CD8-positive, alpha-beta T cell (primary cell): ENCODE measurements at regions of chr22 and their contacts with region 1.

Region 1: DNA sequence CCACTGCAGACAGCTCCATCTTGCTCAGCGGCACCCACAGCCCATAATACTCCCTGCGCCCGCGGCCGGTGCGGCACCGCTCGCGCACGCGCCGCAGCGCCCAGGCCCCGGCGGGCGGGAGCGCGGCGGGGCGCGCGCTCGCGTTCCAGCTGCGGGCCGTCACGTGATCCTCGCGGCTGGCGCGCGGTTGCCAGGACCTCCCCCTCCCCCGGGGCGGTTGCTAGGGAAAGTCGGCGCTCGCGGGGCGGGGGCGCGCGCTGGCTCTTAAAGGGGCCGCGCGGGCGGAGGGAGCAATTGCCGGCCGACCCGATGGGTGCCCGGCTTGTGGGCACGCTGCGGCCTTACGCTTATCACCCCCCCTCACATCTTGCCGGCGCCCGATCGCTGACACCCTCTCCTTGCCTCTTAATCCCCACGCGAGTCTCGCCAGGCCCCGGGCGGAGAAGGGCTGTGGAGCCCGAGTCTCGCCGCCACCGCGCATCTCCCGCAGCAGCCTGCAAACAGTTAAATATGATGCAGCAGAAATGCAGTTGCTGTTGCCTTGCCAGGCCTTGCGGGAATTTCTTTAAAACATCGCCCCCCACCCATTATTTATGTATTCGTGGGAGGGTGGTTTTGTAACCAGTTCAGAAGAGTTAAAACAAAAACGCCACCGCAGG is at the start of gene CBX6:
- DNase-seq: peak; percentile 90 to 98 (median 96)
- ATAC-seq: peak; percentile 70
- H3K4me3 ChIP-seq: peak within 1 kb of the TSS; percentile 91 to 98
- H3K4me3 Mint-ChIP-seq: peak within 1 kb of the TSS; percentile 89
- H3K27ac ChIP-seq: peak within 1 kb of the TSS; percentile 62 to 65
- H3K27ac Mint-ChIP-seq: peak within 1 kb of the TSS; percentile 81
- H3K4me1 ChIP-seq: peaks cover 41% of the 10 kb centered on the region
- H3K4me1 Mint-ChIP-seq: peaks cover 44% of the 10 kb centered on the region
- H3K27me3 ChIP-seq: no peaks in the 10 kb centered on the region
- H3K27me3 Mint-ChIP-seq: no peaks in the 10 kb centered on the region
- CTCF ChIP-seq: no peak
- total RNA-seq, gene CBX6: 36.0 to 39.5 TPM

Region 2: DNA sequence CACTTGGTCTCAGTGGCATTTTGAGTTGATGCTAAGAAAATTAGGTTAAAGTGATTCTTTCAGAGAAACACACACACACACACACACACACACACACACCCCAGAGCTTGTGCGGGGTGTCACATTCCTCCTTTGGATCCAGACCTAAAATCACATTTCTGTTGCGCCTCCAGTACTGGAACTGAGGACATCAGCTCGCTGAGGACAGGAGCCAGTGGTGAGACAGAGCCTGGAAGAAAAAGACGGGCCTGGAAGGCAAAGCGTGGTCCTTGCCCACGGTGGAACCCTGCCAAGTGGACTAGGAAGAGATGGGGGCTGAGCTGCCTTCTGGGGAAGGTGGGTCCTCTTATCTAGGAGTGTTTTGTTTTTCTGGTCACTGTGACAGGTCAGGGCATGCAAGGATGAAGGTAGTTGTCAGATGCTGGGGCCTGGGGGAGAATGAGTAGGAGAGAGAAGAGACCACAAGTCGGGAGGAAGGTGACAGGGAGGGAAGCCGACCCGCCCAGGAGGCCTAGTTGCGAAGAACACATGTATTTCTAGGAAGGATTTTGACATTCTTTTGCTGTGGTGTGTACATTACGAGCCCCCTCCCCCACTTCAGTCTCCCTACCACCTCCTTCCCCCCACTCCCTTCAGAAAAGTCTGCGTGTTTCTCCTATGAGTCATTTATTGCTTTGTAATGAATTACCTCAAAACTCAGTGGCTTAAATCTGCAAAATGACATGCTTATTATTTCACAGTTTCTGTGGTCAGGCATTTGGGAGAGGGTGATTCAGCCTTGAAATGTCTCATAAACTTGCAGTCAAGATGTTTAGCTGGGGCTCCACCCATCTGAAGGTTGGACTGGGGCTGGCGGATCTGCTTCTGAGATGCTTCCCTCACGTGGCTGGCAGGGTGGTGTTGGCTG is 1440.2 kb before region 1 on chr22:
- CTCF ChIA-PET with region 1: no interaction called
- POLR2A ChIA-PET with region 1: no interaction called
- intact Hi-C with region 1: no loop called
- DNase-seq: no peak
- ATAC-seq: no peak
- H3K4me3 ChIP-seq: no peak overlapping the region
- H3K4me3 Mint-ChIP-seq: no peak overlapping the region
- H3K27ac ChIP-seq: no peak overlapping the region
- H3K27ac Mint-ChIP-seq: no peak overlapping the region
- H3K4me1 ChIP-seq: peaks cover 11% of the 10 kb centered on the region
- H3K4me1 Mint-ChIP-seq: peaks cover 11% of the 10 kb centered on the region
- H3K27me3 ChIP-seq: peaks cover 17 to 20% of the 10 kb centered on the region in 2 experiments
- H3K27me3 Mint-ChIP-seq: peaks cover 41% of the 10 kb centered on the region
- CTCF ChIP-seq: no peak

Region 3: DNA sequence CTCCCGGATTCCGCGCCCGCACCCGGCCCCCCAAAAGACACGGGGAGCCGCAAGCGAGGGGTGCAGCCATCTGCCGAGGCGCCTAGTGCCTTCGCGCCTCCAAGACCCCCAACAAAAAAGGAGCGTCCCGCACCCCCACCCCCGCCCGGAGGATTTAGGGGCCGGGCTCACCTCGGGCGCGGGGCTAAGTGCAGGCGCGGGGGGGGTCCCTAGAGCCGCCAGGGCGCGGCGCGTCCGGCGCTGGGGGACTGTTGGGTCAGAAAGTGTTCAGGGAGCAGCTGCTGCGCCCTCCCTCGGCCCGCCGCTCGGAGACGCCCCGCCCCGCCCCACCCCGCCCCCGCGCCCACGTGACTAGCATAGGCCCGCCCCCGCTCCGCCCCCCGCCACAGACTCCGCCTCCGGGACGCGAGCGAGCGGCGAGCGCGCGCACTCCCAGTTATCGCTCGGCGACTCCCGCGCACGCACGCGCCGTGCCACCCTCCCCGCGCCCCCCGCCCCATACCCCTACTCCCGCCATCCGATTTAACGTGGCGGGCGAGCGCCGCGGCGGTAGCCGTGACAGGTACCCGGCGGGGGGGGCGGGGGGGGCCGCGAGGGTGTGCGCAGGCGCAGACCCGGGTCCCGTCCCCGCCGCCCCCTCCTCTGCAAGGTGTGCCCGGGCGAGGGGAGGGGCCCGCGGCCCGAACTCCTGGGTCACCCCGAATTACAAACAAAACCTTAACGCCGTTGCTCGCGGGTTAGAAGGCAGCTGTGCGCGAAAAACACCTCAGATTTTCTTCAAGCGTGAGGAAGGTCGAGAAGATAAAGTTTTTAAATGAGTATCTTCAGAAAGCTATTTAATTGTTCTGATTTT is 473.5 kb before region 1 on chr22:
- CTCF ChIA-PET with region 1: no interaction called
- POLR2A ChIA-PET with region 1: no interaction called
- intact Hi-C with region 1: loop called in 1 of 2 experiments (anchors 5 kb)
- DNase-seq: peak; percentile 67 to 91 (median 82)
- ATAC-seq: peak; percentile 79
- H3K4me3 ChIP-seq: peak overlapping the region; percentile 55 to 60
- H3K4me3 Mint-ChIP-seq: peak overlapping the region; percentile 81
- H3K27ac ChIP-seq: peak overlapping the region in 1 of 2 experiments; percentile 30
- H3K27ac Mint-ChIP-seq: no peak overlapping the region
- H3K4me1 ChIP-seq: no peaks in the 10 kb centered on the region
- H3K4me1 Mint-ChIP-seq: peaks cover 18% of the 10 kb centered on the region
- H3K27me3 ChIP-seq: no peaks in the 10 kb centered on the region
- H3K27me3 Mint-ChIP-seq: no peaks in the 10 kb centered on the region
- CTCF ChIP-seq: no peak

Region 4: DNA sequence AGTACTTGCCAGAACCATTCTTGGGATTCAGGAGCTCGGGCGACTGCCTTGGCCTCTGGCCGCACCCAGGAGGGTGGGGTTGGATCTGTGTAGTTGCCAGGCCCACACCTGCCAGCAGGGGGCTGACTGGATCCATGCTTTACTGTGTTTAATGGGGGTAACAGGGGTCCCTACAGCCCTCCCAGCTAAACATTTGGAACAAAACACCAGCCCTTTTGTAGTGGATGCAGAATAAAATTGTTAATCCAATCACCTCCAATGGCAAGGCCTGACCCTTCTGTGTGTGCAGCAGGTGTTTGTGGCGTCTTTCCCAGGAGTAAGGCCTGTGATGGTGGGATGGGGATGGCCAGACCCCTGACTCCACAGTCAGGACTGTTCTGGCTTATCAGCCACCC is 139.0 kb before region 1 on chr22:
- CTCF ChIA-PET with region 1: interaction called, 14 read pairs
- POLR2A ChIA-PET with region 1: interaction called, 7 read pairs
- intact Hi-C with region 1: no loop called
- DNase-seq: peak in 7 of 9 experiments; percentile 56 to 84 (median 67)
- ATAC-seq: peak; percentile 64
- H3K4me3 ChIP-seq: no peak overlapping the region
- H3K4me3 Mint-ChIP-seq: no peak overlapping the region
- H3K27ac ChIP-seq: peak overlapping the region in 1 of 2 experiments; percentile 40
- H3K27ac Mint-ChIP-seq: peak overlapping the region; percentile 75
- H3K4me1 ChIP-seq: peaks cover 49% of the 10 kb centered on the region
- H3K4me1 Mint-ChIP-seq: peaks cover 56% of the 10 kb centered on the region
- H3K27me3 ChIP-seq: no peaks in the 10 kb centered on the region
- H3K27me3 Mint-ChIP-seq: no peaks in the 10 kb centered on the region
- CTCF ChIP-seq: peak; percentile 83

Region 5: DNA sequence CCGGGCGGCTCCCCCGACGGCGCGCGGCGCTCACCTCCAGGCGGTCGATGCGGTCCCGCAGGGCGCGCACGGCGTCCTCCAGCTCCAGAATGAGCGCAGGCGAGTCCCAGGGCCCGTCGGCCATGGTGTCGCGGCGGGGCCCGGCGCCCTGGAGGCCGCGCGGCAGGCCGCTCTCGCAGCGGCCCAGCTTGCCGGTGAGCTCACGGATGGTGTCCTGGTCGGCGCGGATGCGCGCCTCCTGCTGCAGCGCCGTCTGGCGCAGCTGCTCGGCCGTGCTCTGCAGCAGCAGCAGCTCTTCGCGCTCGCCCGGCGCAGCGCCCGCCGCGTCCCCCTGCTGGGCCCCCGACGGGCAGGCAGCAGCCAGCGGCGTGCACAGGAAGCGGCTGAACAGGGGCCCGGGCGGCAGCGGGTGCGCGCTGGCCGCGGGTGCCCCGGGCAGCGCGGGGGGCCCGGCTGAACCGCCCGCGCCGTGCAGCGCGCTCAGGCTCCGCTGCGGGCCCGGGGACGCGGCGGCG is 29.0 kb before region 1 on chr22:
- CTCF ChIA-PET with region 1: interaction called, 23 read pairs
- POLR2A ChIA-PET with region 1: interaction called, 3 read pairs
- intact Hi-C with region 1: loop called in 1 of 2 experiments (anchors 1 kb)
- DNase-seq: peak; percentile 19 to 85 (median 54)
- ATAC-seq: peak; percentile 85
- H3K4me3 ChIP-seq: peak overlapping the region in 1 of 2 experiments; percentile 50
- H3K4me3 Mint-ChIP-seq: peak overlapping the region; percentile 29
- H3K27ac ChIP-seq: no peak overlapping the region
- H3K27ac Mint-ChIP-seq: no peak overlapping the region
- H3K4me1 ChIP-seq: peaks cover 19% of the 10 kb centered on the region
- H3K4me1 Mint-ChIP-seq: peaks cover 26% of the 10 kb centered on the region
- H3K27me3 ChIP-seq: no peaks in the 10 kb centered on the region
- H3K27me3 Mint-ChIP-seq: peaks cover 14% of the 10 kb centered on the region
- CTCF ChIP-seq: no peak

Region 6: GRCh38 chr22:39003165-39003638 is 130.9 kb after region 1 on chr22:
- CTCF ChIA-PET with region 1: interaction called, 110 read pairs
- POLR2A ChIA-PET with region 1: interaction called, 13 read pairs
- intact Hi-C with region 1: loop called (anchors 1 kb)
- DNase-seq: peak; percentile 43 to 92 (median 76)
- ATAC-seq: peak; percentile 83
- H3K4me3 ChIP-seq: no peak overlapping the region
- H3K4me3 Mint-ChIP-seq: no peak overlapping the region
- H3K27ac ChIP-seq: no peak overlapping the region
- H3K27ac Mint-ChIP-seq: peak overlapping the region; percentile 27
- H3K4me1 ChIP-seq: peaks cover 10% of the 10 kb centered on the region
- H3K4me1 Mint-ChIP-seq: peaks cover 12% of the 10 kb centered on the region
- H3K27me3 ChIP-seq: no peaks in the 10 kb centered on the region
- H3K27me3 Mint-ChIP-seq: peaks cover under 1% of the 10 kb centered on the region
- CTCF ChIP-seq: peak; percentile 68

Region 7: DNA sequence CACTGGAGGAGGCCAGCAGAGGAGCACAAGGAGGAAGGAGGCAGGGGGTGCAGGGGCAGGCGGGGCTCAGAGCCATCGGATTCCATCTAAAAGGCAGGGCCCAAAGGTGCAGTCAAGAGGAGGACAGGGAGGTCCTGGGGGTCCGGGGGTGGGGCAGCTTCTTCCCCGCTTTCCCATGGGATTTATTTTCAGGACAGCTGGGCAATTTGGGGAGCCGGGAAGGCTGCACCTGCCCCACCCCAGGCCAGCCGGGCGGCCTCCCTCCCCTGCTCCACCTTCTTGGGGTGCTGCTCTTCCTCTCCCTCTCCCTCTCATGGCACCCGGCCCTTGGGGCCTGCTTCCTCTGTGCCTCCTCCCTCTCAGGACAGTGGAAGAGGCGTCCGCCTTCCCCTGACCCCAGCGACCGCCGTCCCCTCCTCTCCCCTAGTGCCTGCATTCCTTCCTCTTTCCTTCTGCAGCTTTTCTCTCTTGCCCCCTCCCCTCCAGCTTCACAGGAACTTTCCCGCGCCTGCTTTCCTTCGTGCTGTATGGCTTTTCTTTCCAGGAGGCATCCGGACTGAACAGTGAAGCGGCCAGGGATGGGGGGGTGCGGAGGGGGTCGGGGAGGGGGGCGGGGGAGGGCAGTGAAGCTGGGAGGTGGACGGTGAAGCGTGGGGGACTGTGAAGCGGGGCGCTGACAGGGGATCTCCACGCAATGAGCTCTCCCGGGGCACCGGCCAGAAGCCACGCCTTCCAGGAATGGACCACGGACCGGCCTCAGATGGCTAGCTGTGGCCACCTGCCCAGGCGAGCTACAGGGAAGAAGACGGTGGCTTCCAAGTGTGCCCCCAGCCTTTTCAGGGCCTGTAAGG is 251.7 kb after region 1 on chr22:
- CTCF ChIA-PET with region 1: interaction called, 10 read pairs
- POLR2A ChIA-PET with region 1: no interaction called
- intact Hi-C with region 1: loop called in 1 of 2 experiments (anchors 1 kb)
- DNase-seq: no peak
- ATAC-seq: no peak
- H3K4me3 ChIP-seq: no peak overlapping the region
- H3K4me3 Mint-ChIP-seq: no peak overlapping the region
- H3K27ac ChIP-seq: no peak overlapping the region
- H3K27ac Mint-ChIP-seq: no peak overlapping the region
- H3K4me1 ChIP-seq: no peaks in the 10 kb centered on the region
- H3K4me1 Mint-ChIP-seq: peaks cover 7% of the 10 kb centered on the region
- H3K27me3 ChIP-seq: no peaks in the 10 kb centered on the region
- H3K27me3 Mint-ChIP-seq: no peaks in the 10 kb centered on the region
- CTCF ChIP-seq: no peak

Region 8: GRCh38 chr22:39319270-39320022 is 447.1 kb after region 1 on chr22 and contains the start of gene RPL3:
- CTCF ChIA-PET with region 1: interaction called, 29 read pairs
- POLR2A ChIA-PET with region 1: no interaction called
- intact Hi-C with region 1: loop called in 1 of 2 experiments (anchors 1 kb)
- DNase-seq: peak; percentile 96 to 100 (median 98)
- ATAC-seq: peak; percentile 85
- H3K4me3 ChIP-seq: peak within 1 kb of the TSS; percentile 91 to 99
- H3K4me3 Mint-ChIP-seq: peak within 1 kb of the TSS; percentile 96
- H3K27ac ChIP-seq: peak within 1 kb of the TSS; percentile 81 to 90
- H3K27ac Mint-ChIP-seq: peak within 1 kb of the TSS; percentile 96
- H3K4me1 ChIP-seq: peaks cover 45% of the 10 kb centered on the region
- H3K4me1 Mint-ChIP-seq: peaks cover 46% of the 10 kb centered on the region
- H3K27me3 ChIP-seq: no peaks in the 10 kb centered on the region
- H3K27me3 Mint-ChIP-seq: no peaks in the 10 kb centered on the region
- CTCF ChIP-seq: no peak
- total RNA-seq, gene RPL3: 3,777 to 3,874 TPM

Region 9: GRCh38 chr22:39589875-39590274 is 717.6 kb after region 1 on chr22:
- CTCF ChIA-PET with region 1: no interaction called
- POLR2A ChIA-PET with region 1: no interaction called
- intact Hi-C with region 1: no loop called
- DNase-seq: no peak
- ATAC-seq: no peak
- H3K4me3 ChIP-seq: no peak overlapping the region
- H3K4me3 Mint-ChIP-seq: no peak overlapping the region
- H3K27ac ChIP-seq: no peak overlapping the region
- H3K27ac Mint-ChIP-seq: no peak overlapping the region
- H3K4me1 ChIP-seq: no peaks in the 10 kb centered on the region
- H3K4me1 Mint-ChIP-seq: no peaks in the 10 kb centered on the region
- H3K27me3 ChIP-seq: no peaks in the 10 kb centered on the region
- H3K27me3 Mint-ChIP-seq: peaks cover 7% of the 10 kb centered on the region
- CTCF ChIP-seq: no peak